Endothelial cell of umbilical vein (primary cell): ENCODE measurements at regions of chr5 and their contacts with region 1.

Region 1: DNA sequence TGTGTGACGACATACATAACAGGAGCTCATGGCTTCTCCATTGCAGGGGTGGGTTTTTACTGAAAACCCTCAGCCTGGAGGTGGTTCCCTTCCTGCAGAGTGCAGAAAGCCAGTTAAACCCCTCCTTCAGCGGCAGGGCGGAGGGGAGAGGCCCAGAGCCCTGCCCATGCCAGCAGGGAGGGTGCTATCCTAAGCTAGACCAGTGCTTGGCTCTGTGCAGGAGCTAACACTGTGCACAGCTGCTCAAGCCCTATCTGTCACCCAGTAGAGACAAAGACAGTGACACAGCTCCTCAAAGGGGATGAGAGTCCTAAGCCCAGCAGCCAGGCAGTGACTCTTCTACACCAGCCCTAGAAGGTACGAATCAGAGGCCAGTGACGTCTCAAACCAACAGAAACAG is 70.0 kb upstream of the ZSWIM6 start:
- DNase-seq: no peak
- H3K4me3 ChIP-seq: no peak overlapping the region
- H3K27ac ChIP-seq: no peak overlapping the region
- H3K4me1 ChIP-seq: peaks cover 28% of the 10 kb centered on the region
- H3K27me3 ChIP-seq: no peaks in the 10 kb centered on the region
- CTCF ChIP-seq: no peak
- POLR2A ChIP-seq: no peak

Region 2: DNA sequence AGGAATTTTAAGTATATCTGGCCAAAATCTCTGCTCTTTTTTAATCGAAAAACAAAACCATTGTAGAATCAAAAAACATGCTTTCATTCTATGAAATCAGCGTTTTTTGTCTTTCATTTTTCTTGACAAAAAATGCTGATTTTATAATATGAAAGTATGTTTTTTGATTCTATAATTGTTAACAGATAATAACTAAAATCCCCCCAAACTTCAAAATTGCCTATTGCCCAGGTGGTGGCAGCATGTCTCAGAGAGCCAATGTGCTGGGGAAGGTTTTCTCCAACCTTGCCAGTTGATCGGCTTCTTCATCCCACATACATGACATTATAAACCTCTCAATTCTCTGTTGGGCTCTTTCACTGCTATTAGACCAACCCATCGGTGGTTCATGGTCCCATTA is 94.7 kb before region 1 on chr5:
- CTCF ChIA-PET with region 1: no interaction called
- POLR2A ChIA-PET with region 1: no interaction called
- dilution Hi-C with region 1: no loop called
- intact Hi-C with region 1: loop called (anchors 5 kb)
- DNase-seq: peak; percentile 55
- H3K4me3 ChIP-seq: no peak overlapping the region
- H3K27ac ChIP-seq: no peak overlapping the region
- H3K4me1 ChIP-seq: peaks cover 4% of the 10 kb centered on the region
- H3K27me3 ChIP-seq: no peaks in the 10 kb centered on the region
- CTCF ChIP-seq: peak; percentile 33 to 43
- POLR2A ChIP-seq: no peak

Region 3: GRCh38 chr5:61182449-61182848 is 79.6 kb before region 1 on chr5:
- CTCF ChIA-PET with region 1: no interaction called
- POLR2A ChIA-PET with region 1: no interaction called
- dilution Hi-C with region 1: no loop called
- intact Hi-C with region 1: loop called (anchors 5 kb)
- DNase-seq: peak; percentile 62
- H3K4me3 ChIP-seq: no peak overlapping the region
- H3K27ac ChIP-seq: no peak overlapping the region
- H3K4me1 ChIP-seq: no peaks in the 10 kb centered on the region
- H3K27me3 ChIP-seq: no peaks in the 10 kb centered on the region
- CTCF ChIP-seq: no peak
- POLR2A ChIP-seq: no peak

Region 4: GRCh38 chr5:61290791-61291210 is 28.7 kb after region 1 on chr5:
- CTCF ChIA-PET with region 1: no interaction called
- POLR2A ChIA-PET with region 1: no interaction called
- dilution Hi-C with region 1: no loop called
- intact Hi-C with region 1: no loop called
- DNase-seq: peak; percentile 83
- H3K4me3 ChIP-seq: peak overlapping the region in 1 of 3 experiments; percentile 3
- H3K27ac ChIP-seq: peak overlapping the region; percentile 44
- H3K4me1 ChIP-seq: peaks cover 20% of the 10 kb centered on the region
- H3K27me3 ChIP-seq: no peaks in the 10 kb centered on the region
- CTCF ChIP-seq: no peak
- POLR2A ChIP-seq: no peak

Region 5: GRCh38 chr5:61313960-61314681 is 52.0 kb after region 1 on chr5:
- CTCF ChIA-PET with region 1: no interaction called
- POLR2A ChIA-PET with region 1: no interaction called
- dilution Hi-C with region 1: no loop called
- intact Hi-C with region 1: loop called (anchors 1 kb)
- DNase-seq: peak; percentile 97
- H3K4me3 ChIP-seq: no peak overlapping the region
- H3K27ac ChIP-seq: peak overlapping the region; percentile 95
- H3K4me1 ChIP-seq: peaks cover 57% of the 10 kb centered on the region
- H3K27me3 ChIP-seq: no peaks in the 10 kb centered on the region
- CTCF ChIP-seq: no peak
- POLR2A ChIP-seq: peak; percentile 73